ENCODE measurements at regions of chr12 and their contacts with region 1.

Region 1: DNA sequence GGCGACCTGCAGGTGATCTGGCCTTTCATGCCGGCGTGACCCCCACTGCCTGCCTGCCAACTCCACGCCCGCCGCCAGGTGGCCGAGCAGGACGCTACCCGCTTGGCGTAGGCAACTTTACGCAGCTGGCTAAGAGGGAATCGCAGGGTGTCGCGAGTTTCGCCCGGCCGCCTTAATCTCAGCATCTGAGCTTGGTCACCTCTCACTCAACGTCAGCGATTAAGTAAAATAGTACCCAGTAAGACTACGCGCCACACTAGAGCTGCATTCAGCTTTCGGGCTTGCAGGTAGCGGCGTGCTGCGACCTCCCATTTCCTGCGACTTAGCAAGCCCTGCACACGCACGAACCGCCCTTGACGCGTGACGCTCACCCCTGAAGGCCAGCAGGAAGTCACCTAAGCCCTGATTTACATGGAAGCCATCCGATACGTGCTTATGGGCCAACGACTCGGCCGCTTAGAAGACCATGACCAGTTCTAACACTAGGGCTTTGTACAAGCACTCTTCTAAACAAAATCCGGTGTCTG is 33.2 kb downstream of the WBP11 start:
- DNase-seq: peak; percentile 80 to 93 (median 88)
- ATAC-seq: peak; percentile 49 to 58
- H3K4me3 Mint-ChIP-seq: peak overlapping the region; percentile 89 to 98 (median 96)
- H3K27ac Mint-ChIP-seq: peak overlapping the region; percentile 99 to 100 (median 99)
- H3K4me1 Mint-ChIP-seq: peaks cover 33 to 81% (median 51%) of the 10 kb centered on the region in 4 donors
- H3K27me3 Mint-ChIP-seq: peaks cover 0 to 3% (median 0%) of the 10 kb centered on the region in 5 donors

Region 2: DNA sequence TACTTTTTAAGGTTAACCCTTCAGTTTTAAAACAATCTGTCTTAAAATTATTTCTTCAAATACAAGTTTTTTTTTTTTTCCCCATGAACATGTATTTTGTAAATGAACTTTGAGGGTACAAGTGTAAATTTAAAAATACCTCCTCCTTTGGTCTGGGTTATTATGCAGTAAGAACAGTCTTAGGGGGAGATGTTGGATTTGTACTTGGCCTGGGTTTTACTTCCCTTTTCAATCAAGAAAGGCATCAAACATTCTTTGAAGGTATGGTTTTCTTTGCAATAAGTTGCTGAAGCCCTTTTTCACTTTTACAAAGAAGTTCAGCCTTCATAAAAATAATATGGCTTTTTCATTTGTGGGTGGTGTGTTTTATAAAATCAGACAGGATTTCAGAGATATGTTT is 12.7 kb after region 1 on chr12:
- POLR2A ChIA-PET with region 1: interaction called, 40 read pairs
- DNase-seq: no peak
- ATAC-seq: no peak
- H3K4me3 Mint-ChIP-seq: no peak overlapping the region
- H3K27ac Mint-ChIP-seq: peak overlapping the region in 2 of 10 donors; percentile 42 to 48
- H3K4me1 Mint-ChIP-seq: peaks cover 3 to 11% (median 8%) of the 10 kb centered on the region in 4 donors
- H3K27me3 Mint-ChIP-seq: no peaks in the 10 kb centered on the region

Region 3: DNA sequence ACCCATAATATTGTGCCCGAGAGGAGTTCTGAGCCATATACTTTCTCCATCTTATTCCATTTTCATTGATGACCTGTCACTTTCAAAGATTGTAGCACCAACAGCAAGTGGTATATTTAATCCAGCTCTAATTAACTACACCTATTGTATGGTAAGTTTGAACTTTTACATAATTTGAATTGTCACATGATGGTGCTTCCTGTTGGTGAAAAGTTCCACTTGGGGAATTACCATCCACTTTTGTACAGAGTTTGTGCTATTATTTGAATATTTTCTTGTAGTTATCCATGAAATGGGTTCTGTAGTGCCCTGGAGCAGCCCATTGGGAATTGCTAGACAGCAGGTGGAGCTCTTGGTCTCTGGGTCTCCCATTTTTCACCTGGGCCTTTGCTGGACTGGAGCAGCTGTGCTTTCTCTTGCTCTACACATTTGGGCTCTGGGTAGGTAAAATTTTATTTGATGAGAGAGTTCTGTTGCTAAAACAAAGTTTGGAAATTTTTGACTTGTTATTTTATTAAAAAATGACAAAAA is 41.0 kb after region 1 on chr12:
- POLR2A ChIA-PET with region 1: interaction called, 223 read pairs
- DNase-seq: no peak
- ATAC-seq: peak; percentile 42 to 50
- H3K4me3 Mint-ChIP-seq: peak overlapping the region in 3 of 10 donors; percentile 4 to 49 (median 46)
- H3K27ac Mint-ChIP-seq: peak overlapping the region in 4 of 10 donors; percentile 6 to 54 (median 39)
- H3K4me1 Mint-ChIP-seq: peaks cover 10 to 16% (median 14%) of the 10 kb centered on the region in 4 donors
- H3K27me3 Mint-ChIP-seq: no peaks in the 10 kb centered on the region

Region 4: GRCh38 chr12:14960548-14961465 is 190.8 kb after region 1 on chr12:
- POLR2A ChIA-PET with region 1: interaction called, 86 read pairs
- DNase-seq: peak; percentile 30 to 84 (median 62)
- ATAC-seq: peak; percentile 52 to 53
- H3K4me3 Mint-ChIP-seq: peak overlapping the region; percentile 95 to 100 (median 99)
- H3K27ac Mint-ChIP-seq: peak overlapping the region; percentile 95 to 100 (median 99)
- H3K4me1 Mint-ChIP-seq: peaks cover 39 to 89% (median 70%) of the 10 kb centered on the region in 4 donors
- H3K27me3 Mint-ChIP-seq: no peaks in the 10 kb centered on the region